ENCODE measurements at regions of chr16 and their contacts with region 1.

Region 1: DNA sequence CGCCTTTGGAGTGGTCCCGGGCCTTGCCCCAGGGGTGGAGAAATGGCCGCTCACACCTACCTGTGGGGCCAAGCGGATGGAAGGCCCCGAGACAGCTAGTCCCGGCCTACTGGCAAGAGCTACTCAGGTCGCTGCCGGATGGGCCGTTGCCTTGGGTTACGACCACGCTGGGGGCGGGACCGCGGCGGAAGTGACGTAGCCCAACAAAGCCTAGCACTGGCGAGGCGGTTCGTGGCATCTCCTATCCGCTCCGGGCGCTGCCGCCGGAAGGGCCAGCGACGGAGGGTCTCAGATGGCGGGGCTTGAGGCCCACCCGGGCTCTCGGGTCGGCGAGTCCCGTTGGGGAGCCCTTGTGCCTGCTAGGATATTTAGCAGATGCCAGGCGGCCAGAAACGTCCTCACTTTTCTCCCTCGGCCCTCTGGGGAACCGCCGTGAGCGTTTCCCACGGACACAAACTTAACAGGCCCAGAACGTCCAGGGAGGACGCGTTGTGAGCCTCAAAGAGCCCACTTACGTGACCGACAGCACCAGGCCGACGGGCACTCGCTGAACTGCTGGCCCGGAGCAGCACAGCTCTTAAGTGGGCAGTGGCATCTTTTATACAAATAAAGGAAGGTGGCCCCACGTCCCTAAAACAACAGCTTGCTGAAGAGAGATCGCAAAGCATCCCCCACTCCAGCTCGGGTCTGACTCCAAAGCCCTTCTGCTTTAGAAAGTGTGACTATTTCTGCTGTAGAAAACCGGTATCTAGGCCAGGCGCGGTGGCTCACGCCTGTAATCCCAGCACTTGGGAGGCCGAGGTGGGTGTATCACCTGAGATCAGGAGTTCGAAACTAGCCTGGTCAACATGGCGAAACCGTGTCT is at the start of gene C16orf46:
- DNase-seq: peak; percentile 96 to 99
- H3K4me3 ChIP-seq: peak within 1 kb of the TSS; percentile 63 to 69
- H3K27ac ChIP-seq: peak within 1 kb of the TSS; percentile 96 to 97
- H3K4me1 ChIP-seq: peaks cover 0 to 11% (median 4%) of the 10 kb centered on the region in 4 donors
- H3K27me3 ChIP-seq: no peaks in the 10 kb centered on the region
- CTCF ChIP-seq: no peak

Region 2: GRCh38 chr16:81006814-81007696 is 70.3 kb before region 1 on chr16 and contains the starts of genes CENPN and CMC2:
- intact Hi-C with region 1: loop called (anchors 2 kb)
- DNase-seq: peak; percentile 100
- H3K4me3 ChIP-seq: peak within 1 kb of the TSS; percentile 67 to 95
- H3K27ac ChIP-seq: peak within 1 kb of the TSS; percentile 94 to 98
- H3K4me1 ChIP-seq: peaks cover 0 to 21% (median 17%) of the 10 kb centered on the region in 4 donors
- H3K27me3 ChIP-seq: no peaks in the 10 kb centered on the region
- CTCF ChIP-seq: peak in 1 of 2 experiments; percentile 4

Region 3: DNA sequence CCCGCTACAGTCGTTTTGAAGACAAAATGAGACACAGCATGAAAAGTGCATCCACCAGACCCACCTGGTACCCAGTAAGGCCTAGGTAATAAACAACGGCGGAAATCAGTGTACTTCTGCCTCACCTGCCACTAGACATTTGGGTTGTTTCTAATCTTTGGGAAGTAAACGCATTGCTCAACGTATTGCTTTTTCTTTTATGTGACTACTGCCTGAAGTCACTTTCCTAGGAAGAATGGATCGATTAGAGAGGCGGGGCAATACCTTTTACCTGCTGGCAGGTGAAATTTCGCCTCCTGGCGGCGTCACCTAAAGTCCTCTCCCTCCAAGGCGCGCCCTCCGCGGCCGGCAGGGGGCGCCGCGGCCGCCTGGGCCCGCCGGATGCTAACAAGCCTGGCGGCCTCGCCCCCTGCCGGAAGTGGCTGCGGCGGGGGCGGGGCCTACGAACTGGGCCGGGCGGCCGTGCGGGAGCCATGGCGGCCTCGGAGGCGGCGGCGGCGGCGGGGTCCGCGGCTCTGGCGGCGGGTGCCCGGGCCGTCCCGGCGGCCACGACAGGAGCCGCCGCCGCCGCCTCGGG is 41.8 kb before region 1 on chr16 and contains the start of gene ATMIN:
- intact Hi-C with region 1: loop called (anchors 10 kb)
- DNase-seq: peak; percentile 80 to 89
- H3K4me3 ChIP-seq: peak within 1 kb of the TSS; percentile 70 to 84
- H3K27ac ChIP-seq: peak within 1 kb of the TSS; percentile 62 to 75
- H3K4me1 ChIP-seq: peaks cover 0 to 34% (median 15%) of the 10 kb centered on the region in 4 donors
- H3K27me3 ChIP-seq: no peaks in the 10 kb centered on the region
- CTCF ChIP-seq: peak; percentile 92 to 98

Region 4: GRCh38 chr16:81095953-81096717 is 18.8 kb after region 1 on chr16 and contains the start of gene GCSH:
- intact Hi-C with region 1: loop called (anchors 2 kb)
- DNase-seq: peak; percentile 99 to 100
- H3K4me3 ChIP-seq: peak within 1 kb of the TSS; percentile 69 to 94
- H3K27ac ChIP-seq: peak within 1 kb of the TSS; percentile 82 to 84
- H3K4me1 ChIP-seq: peaks cover 0 to 13% (median 3%) of the 10 kb centered on the region in 4 donors
- H3K27me3 ChIP-seq: no peaks in the 10 kb centered on the region
- CTCF ChIP-seq: no peak

Region 5: GRCh38 chr16:81181013-81181720 is 103.9 kb after region 1 on chr16:
- intact Hi-C with region 1: no loop called
- DNase-seq: peak; percentile 94 to 95
- H3K4me3 ChIP-seq: peak overlapping the region; percentile 19 to 32
- H3K27ac ChIP-seq: peak overlapping the region; percentile 78 to 84
- H3K4me1 ChIP-seq: peaks cover 0 to 25% (median 9%) of the 10 kb centered on the region in 4 donors
- H3K27me3 ChIP-seq: no peaks in the 10 kb centered on the region
- CTCF ChIP-seq: no peak

Region 6: DNA sequence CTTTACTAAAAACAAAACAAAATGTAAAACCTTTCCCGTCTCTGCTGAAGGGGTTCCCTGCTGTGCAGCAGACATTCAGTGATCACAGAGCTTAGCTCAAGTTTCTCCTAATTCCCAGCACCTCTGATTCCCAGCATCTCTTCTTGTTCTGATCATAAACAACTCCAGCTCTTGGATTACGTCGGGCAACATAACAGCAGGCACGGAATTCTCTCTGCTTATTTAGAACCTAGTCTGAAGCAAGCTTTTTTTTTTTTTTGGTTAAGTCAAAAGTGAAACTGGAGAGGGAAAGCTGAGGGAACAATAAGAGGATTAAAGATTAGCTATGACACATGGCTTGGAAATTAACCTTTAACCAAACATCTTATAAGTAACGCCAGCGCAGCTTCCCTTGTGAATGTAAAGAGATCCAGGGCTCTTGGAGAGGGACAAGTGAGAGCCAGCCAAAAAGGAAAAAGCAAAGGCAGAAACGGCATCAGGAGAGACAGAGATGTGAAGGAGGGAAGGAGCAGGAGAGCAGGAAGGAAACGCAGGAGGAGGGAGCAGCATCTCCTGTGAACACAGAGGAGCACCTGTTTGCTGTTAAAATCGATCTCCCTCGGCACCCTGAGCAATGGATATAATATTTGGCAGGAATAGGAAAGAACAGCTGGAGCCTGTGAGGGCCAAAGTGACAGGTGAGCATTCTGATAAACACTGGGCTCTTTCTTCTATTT is 161.1 kb after region 1 on chr16 and contains the start of gene BCO1:
- intact Hi-C with region 1: no loop called
- DNase-seq: no peak
- H3K4me3 ChIP-seq: peak within 1 kb of the TSS; percentile 21 to 38
- H3K27ac ChIP-seq: peak within 1 kb of the TSS in 1 of 2 donors; percentile 28
- H3K4me1 ChIP-seq: no peaks in the 10 kb centered on the region
- H3K27me3 ChIP-seq: no peaks in the 10 kb centered on the region
- CTCF ChIP-seq: no peak

Measured in tibial artery (tissue), 4 donors.